ENCODE measurements at regions of chr11 and their contacts with region 1.

Region 1: GRCh38 chr11:69683764-69684333 is 8.7 kb upstream of the LTO1 start:
- DNase-seq: no peak
- ATAC-seq: no peak
- H3K4me3 ChIP-seq: no peak overlapping the region
- H3K27ac ChIP-seq: no peak overlapping the region
- H3K4me1 ChIP-seq: no peaks in the 10 kb centered on the region
- H3K27me3 ChIP-seq: peaks cover 3% of the 10 kb centered on the region; the same call in 1 of the 2 replicates
- CTCF ChIP-seq: peak; percentile 30
- POLR2A ChIP-seq: no peak
- RAD21 ChIP-seq: peak; percentile 43

Region 2: DNA sequence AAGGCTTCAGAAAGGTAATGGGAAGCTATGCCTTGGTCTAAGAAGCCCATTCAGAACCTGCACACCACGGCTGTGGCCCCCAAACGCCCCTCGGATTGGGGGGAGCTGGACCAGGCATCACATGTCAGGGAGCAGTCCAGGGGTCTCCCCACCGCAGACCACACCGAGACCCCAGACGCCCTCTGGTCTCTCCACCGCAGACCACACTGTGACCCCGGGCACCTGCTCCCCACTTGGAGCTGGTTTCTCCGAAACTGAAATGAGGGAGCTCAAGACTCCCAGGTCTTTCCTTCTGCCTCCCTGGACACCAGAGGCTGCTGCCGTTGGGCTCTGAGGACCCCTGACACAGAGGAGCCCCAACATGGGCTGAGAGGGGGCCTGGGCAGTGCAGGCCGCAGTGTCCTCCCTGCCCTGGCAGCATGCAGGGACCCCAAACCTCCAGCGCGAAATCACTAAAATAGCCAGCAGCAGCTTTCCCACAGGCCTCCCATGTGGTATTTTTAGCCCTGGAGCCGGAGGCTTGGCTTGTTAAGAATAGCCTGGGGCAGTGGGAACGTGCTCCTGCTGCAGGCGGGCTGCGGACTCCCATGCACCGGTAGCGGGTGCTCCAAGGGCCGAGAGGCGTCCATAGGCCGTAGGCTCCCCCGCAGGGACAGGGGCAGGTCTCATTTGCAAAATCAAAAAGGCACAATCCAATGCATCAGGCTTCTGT is 194.7 kb before region 1 on chr11:
- CTCF ChIA-PET with region 1: no interaction called
- POLR2A ChIA-PET with region 1: no interaction called
- dilution Hi-C with region 1: no loop called
- in situ Hi-C with region 1: no loop called
- intact Hi-C with region 1: no loop called
- DNase-seq: no peak
- ATAC-seq: no peak
- H3K4me3 ChIP-seq: no peak overlapping the region
- H3K27ac ChIP-seq: no peak overlapping the region
- H3K4me1 ChIP-seq: no peaks in the 10 kb centered on the region
- H3K27me3 ChIP-seq: peaks cover 2% of the 10 kb centered on the region; the same call in 1 of the 2 replicates
- CTCF ChIP-seq: no peak
- POLR2A ChIP-seq: no peak
- RAD21 ChIP-seq: no peak

Region 3: DNA sequence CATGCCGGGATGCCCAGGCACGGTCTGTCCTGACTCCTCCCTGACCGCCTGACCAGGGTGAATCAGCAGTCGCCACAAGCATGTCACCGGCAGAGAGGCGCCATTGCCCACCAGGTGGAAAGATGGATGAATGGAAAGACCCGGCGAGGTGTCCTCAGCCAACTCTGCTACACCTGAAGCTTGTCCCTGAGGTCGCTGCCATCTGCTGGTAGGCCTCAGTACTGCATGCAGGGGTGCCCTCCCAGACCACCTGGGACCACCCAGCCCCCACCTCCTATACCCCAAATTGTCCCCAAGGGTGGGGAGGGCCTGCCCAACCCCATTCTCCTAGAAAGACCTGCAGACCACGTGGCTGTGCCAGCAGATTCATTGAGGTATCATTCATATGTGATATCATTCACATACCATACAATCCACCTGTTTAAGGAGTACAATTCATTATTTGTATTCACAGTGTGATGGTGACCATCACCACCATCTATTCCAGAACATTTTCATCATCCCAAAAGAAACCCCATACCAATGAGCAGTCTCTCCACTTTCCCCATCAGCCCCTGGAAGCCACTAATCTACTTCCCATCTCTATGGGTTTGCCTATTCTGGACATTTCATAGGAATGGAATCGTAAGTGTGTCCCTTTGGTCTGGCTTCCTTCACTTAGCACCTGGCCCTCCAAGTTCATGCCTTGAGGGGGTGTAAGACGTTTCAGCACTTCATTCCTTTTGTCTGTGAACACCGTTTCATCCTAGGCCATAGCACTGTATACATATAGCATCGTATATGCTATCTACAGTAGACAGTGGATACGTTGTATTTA is 117.9 kb after region 1 on chr11:
- CTCF ChIA-PET with region 1: no interaction called
- POLR2A ChIA-PET with region 1: no interaction called
- dilution Hi-C with region 1: no loop called
- in situ Hi-C with region 1: no loop called
- intact Hi-C with region 1: loop called (anchors 1 kb)
- DNase-seq: no peak
- ATAC-seq: peak; percentile 62
- H3K4me3 ChIP-seq: no peak overlapping the region
- H3K27ac ChIP-seq: no peak overlapping the region
- H3K4me1 ChIP-seq: no peaks in the 10 kb centered on the region
- H3K27me3 ChIP-seq: peaks cover 29% of the 10 kb centered on the region
- CTCF ChIP-seq: peak; percentile 63
- POLR2A ChIP-seq: no peak
- RAD21 ChIP-seq: peak; percentile 55

Region 4: DNA sequence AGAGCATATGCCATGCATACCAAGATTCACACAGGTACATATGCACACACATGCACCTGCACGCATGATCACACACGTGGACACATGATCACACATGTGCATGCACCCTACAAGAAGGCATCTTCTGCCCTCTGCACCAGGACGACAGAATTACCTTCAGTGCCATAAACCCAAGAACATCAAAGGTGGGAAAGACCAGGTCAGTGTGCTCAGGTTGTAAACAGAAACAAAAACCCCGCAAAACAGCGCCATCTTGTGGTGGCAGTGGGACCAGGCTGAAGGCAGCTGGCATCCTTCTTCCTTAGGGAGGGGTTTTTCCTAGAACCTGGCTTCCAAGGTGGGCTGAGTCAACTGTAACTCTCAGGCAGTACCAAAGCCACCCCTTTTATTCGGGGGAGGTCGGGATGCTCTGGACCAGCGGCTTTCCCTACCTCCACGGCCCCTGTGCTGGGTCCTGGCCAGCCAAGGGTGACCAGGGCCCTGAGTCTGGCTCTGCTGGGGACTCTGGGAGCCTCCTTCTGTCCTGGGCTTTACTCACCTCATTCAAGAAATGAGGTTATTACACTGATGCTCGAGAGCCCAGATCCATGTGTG is 204.7 kb after region 1 on chr11:
- CTCF ChIA-PET with region 1: no interaction called
- POLR2A ChIA-PET with region 1: no interaction called
- dilution Hi-C with region 1: no loop called
- in situ Hi-C with region 1: loop called (anchors 5 kb)
- intact Hi-C with region 1: loop called (anchors 1 kb)
- DNase-seq: peak; percentile 38
- ATAC-seq: peak; percentile 76
- H3K4me3 ChIP-seq: no peak overlapping the region
- H3K27ac ChIP-seq: no peak overlapping the region
- H3K4me1 ChIP-seq: peaks cover 7% of the 10 kb centered on the region; the same call in 1 of the 2 replicates
- H3K27me3 ChIP-seq: peaks cover 22% of the 10 kb centered on the region
- CTCF ChIP-seq: peak; percentile 82
- POLR2A ChIP-seq: no peak
- RAD21 ChIP-seq: peak; percentile 73

Region 5: DNA sequence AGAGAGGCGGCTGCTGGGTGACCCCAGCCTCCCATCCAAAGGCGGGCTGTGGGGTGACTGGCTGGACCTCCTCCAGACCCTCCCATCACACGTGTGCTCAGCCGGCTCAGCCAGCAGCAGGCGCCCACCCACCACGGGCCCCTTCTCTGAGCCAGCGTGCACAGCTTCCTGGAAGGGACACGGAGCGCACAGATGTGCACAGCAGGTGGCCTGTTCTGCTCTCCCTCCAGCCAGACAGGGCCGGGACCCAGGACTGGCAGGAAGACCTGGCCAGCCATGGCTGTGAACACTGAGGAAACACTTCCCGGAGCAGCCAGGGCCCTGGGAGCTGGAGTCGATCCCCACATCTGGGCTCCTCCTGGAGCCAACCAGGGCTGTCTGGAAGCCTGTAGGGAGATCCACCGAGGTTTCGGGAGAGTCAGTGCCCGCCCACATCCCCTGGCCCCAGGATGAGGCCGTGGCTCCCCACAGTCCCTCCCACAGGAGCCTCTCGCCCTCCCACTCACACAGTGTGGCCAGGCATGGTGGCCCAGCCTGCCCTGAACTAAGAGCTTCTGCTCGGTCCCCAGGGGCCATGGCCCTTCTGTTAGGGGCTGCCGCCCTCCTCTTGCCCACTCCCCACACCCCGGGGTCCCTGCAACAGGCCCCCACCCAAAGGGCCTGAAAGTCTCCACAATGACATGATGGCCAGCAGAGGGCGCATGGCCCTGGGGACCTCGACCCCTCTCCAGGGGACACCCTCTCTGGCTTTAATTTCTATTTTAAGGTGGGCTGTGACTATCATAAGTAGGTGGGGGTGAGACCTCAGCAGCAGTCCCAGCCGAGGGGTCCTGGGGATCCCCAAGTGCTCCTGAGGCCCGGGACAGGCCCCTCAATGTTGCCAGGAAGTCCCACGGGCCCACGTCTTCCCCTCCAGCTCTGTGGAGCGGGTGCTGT is 226.0 kb after region 1 on chr11:
- CTCF ChIA-PET with region 1: no interaction called
- POLR2A ChIA-PET with region 1: no interaction called
- dilution Hi-C with region 1: no loop called
- in situ Hi-C with region 1: no loop called
- intact Hi-C with region 1: loop called (anchors 1 kb)
- DNase-seq: no peak
- ATAC-seq: peak; percentile 21; the same call in 1 of the 2 replicates
- H3K4me3 ChIP-seq: no peak overlapping the region
- H3K27ac ChIP-seq: no peak overlapping the region
- H3K4me1 ChIP-seq: no peaks in the 10 kb centered on the region
- H3K27me3 ChIP-seq: peaks cover 3% of the 10 kb centered on the region; the same call in 1 of the 2 replicates
- CTCF ChIP-seq: peak; percentile 50
- POLR2A ChIP-seq: no peak
- RAD21 ChIP-seq: peak; percentile 44